T-cell (primary cell): ENCODE measurements at regions of chr6 and their contacts with region 1.

Region 1: DNA sequence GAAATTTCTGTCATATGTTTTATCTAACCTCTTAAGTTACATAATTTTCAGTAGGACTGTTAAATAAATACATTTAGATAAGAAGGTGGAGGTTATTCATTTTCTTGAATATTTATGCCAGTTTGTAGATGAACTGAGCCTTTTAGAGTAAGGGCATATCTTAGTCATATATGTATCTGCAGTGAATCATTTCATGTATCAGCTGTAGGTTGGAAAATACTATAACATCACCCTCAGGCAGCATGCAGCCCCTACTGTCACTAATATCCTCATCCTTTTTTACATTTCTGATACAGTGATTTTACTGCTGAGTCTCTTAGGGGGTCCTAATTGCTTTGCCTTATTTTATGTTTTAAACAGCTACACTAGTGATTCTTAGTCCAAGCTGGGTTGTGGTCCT is 19.5 kb upstream of the SUMO4 start:
- DNase-seq: no peak
- ATAC-seq: no peak
- H3K4me3 ChIP-seq: no peak overlapping the region
- H3K4me3 Mint-ChIP-seq: no peak overlapping the region
- H3K27ac ChIP-seq: no peak overlapping the region
- H3K27ac Mint-ChIP-seq: peak overlapping the region in 1 of 2 donors; percentile 22
- H3K4me1 ChIP-seq: peaks cover 0 to 2% of the 10 kb centered on the region in 2 experiments
- H3K4me1 Mint-ChIP-seq: peaks cover 55 to 62% (median 55%) of the 10 kb centered on the region in 3 donors
- H3K27me3 ChIP-seq: no peaks in the 10 kb centered on the region
- H3K27me3 Mint-ChIP-seq: no peaks in the 10 kb centered on the region

Region 2: DNA sequence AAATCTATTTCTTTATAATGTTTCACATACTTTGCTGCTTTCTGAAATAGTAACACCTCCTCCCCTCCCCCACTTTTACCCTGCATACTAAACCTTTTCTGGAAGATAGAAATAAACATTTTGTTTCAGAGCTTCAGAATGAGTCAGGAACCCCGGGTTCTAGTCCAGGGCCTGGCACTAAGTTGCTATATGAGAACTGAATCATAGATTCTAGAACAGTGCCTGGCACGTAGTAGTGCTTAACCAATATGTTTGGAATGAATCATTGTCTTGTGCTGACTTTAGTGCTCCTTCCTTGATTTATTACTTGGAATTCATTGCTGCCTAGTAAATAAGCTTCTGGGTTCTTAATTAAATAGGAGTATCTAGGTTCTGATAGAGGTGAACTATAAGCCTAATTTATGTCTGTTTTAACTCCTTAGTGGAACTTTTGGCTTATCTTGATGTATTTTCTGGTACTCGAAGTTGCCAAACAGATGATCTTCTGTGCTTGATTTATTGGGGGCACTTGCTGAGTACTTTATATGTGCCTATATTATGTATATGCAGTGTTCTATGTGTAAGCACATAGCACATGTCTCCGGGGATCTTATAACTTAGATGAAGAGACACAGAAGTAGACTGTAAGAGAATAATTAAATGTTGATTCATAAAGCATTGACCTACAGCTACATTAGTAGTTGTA is 44.5 kb before region 1 on chr6:
- CTCF ChIA-PET with region 1: interaction called, 4 to 12 read pairs
- POLR2A ChIA-PET with region 1: interaction called in 1 of 2 experiments, 11 read pairs
- DNase-seq: no peak
- ATAC-seq: peak in 1 of 4 experiments; percentile 50
- H3K4me3 ChIP-seq: no peak overlapping the region
- H3K4me3 Mint-ChIP-seq: peak overlapping the region; percentile 40 to 63 (median 44)
- H3K27ac ChIP-seq: no peak overlapping the region
- H3K27ac Mint-ChIP-seq: peak overlapping the region; percentile 25 to 66
- H3K4me1 ChIP-seq: peaks cover 27 to 44% of the 10 kb centered on the region in 2 experiments
- H3K4me1 Mint-ChIP-seq: peaks cover 85 to 89% (median 86%) of the 10 kb centered on the region in 3 donors
- H3K27me3 ChIP-seq: no peaks in the 10 kb centered on the region
- H3K27me3 Mint-ChIP-seq: no peaks in the 10 kb centered on the region

Region 3: DNA sequence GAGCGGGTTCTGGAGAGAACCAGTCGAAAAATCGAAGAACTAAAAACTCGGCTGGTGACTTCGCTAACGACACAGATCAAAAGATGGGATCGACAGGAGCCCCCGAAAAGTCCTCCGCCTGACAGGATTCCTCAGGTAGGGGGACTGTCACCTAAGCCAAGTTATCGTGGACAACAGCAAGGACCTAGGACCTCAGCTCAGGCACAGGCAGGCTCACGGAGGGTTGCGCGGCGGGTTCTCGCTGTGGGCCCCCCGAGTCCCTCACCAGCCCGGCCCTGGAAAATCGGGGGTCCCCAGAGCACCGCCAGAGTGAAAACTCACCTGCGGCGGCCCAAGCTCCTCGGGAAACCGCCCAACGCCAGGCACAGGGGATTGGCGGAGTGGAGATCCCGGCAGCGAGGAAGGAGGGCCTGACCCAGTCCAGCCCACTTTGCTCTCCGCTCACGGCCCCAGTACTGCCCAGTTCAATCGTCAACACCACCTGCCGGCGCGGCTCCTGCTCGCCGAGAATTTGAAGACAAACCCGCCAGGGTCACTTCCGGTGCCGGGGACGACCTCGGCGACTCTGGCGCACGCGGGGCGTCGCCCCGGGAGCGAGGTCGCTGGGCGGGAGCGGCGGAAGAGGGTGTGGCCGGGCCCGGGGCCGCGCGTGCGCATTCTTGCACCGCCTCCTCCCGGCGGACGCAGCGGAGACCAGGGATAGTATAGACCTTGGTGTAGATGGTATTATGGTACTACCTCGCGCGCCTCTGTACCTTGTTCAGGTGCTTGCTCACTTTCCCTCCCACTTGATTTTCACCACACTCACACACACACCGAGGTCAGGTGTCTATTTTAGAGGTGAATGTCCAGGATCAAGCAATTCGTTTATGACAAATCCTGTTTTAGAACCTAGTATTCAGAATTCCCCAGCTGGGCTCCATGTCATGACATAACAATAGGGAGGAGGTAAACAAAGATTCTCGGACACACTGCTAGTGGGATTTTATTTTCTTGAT is 267.9 kb after region 1 on chr6 and contains the start of gene KATNA1:
- CTCF ChIA-PET with region 1: no interaction called
- POLR2A ChIA-PET with region 1: no interaction called
- DNase-seq: peak; percentile 64 to 89 (median 73)
- ATAC-seq: peak; percentile 93 to 96 (median 96)
- H3K4me3 ChIP-seq: peak within 1 kb of the TSS; percentile 83 to 87
- H3K4me3 Mint-ChIP-seq: peak within 1 kb of the TSS; percentile 89 to 97 (median 90)
- H3K27ac ChIP-seq: peak within 1 kb of the TSS; percentile 69
- H3K27ac Mint-ChIP-seq: peak within 1 kb of the TSS; percentile 61 to 85
- H3K4me1 ChIP-seq: peaks cover 7 to 18% of the 10 kb centered on the region in 2 experiments
- H3K4me1 Mint-ChIP-seq: peaks cover 28 to 39% (median 37%) of the 10 kb centered on the region in 3 donors
- H3K27me3 ChIP-seq: no peaks in the 10 kb centered on the region
- H3K27me3 Mint-ChIP-seq: no peaks in the 10 kb centered on the region
- total RNA-seq, gene KATNA1: 15.2 to 18.2 (median 15.9) TPM